ENCODE measurements at regions of chr1 and their contacts with region 1.

Region 1: DNA sequence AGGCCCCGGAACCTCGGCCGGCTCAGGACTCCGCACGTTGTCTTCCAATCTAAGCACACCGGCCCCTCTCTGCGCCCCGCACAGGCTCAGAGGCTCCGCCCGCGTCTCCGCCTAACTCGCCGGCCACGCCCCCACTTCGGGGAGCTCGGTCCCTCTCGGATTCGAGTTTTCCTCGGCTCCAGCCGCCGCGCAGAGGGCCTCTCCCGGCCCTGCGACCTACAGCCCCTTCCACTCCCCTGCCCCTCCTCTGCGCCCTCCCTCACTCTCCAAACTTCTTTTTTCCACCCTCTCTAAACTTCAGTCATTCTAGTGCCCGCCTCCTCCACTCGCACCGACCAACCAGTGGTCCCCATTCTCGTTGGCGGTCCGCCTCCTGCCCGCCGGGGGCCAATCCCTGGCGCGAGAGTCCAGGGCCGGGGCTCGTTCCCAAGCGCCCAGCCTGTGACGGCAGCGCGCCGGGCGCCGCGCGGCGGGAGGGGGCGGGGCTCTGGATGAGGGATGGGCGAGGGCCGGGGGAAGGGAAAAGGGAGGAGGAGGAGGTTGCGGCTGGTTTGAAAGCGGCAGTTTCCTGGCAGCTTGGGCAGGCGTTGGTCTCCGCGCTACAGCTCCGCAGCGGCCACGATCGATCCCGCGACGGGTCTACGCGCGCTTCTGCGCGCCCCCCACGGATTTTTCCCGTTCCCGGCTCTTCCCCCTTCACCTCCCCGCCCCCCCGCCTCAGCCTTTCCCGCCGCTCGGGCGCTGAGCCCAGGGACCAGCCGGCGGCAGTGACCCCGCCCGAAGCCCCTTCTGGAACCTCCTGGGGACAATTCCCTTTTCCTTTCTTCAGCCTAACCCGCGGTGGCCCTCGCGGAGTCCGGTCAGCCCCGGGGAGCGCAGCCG is at the start of gene MAGI3:
- DNase-seq: peak; percentile 70 to 93 (median 88)
- ATAC-seq: peak; percentile 91
- H3K4me3 ChIP-seq: peak within 1 kb of the TSS; percentile 94 to 97
- H3K4me3 Mint-ChIP-seq: peak within 1 kb of the TSS; percentile 95
- H3K27ac ChIP-seq: peak within 1 kb of the TSS; percentile 30 to 47
- H3K27ac Mint-ChIP-seq: peak within 1 kb of the TSS; percentile 84
- H3K4me1 ChIP-seq: peaks cover 13% of the 10 kb centered on the region
- H3K4me1 Mint-ChIP-seq: peaks cover 24% of the 10 kb centered on the region
- H3K27me3 ChIP-seq: peaks cover 0 to 5% of the 10 kb centered on the region in 2 experiments
- H3K27me3 Mint-ChIP-seq: peaks cover 12% of the 10 kb centered on the region
- CTCF ChIP-seq: no peak
- total RNA-seq, gene MAGI3: 1.7 to 3.2 TPM

Region 2: GRCh38 chr1:112230232-112230631 is 1160.0 kb before region 1 on chr1:
- CTCF ChIA-PET with region 1: no interaction called
- POLR2A ChIA-PET with region 1: no interaction called
- intact Hi-C with region 1: no loop called
- DNase-seq: no peak
- ATAC-seq: no peak
- H3K4me3 ChIP-seq: no peak overlapping the region
- H3K4me3 Mint-ChIP-seq: no peak overlapping the region
- H3K27ac ChIP-seq: no peak overlapping the region
- H3K27ac Mint-ChIP-seq: no peak overlapping the region
- H3K4me1 ChIP-seq: no peaks in the 10 kb centered on the region
- H3K4me1 Mint-ChIP-seq: no peaks in the 10 kb centered on the region
- H3K27me3 ChIP-seq: no peaks in the 10 kb centered on the region
- H3K27me3 Mint-ChIP-seq: peaks cover 9% of the 10 kb centered on the region
- CTCF ChIP-seq: no peak

Region 3: GRCh38 chr1:113403065-113403464 is 12.9 kb after region 1 on chr1:
- CTCF ChIA-PET with region 1: interaction called, 7 read pairs
- POLR2A ChIA-PET with region 1: no interaction called
- intact Hi-C with region 1: loop called in 1 of 2 experiments (anchors 2 kb)
- DNase-seq: no peak
- ATAC-seq: no peak
- H3K4me3 ChIP-seq: no peak overlapping the region
- H3K4me3 Mint-ChIP-seq: no peak overlapping the region
- H3K27ac ChIP-seq: no peak overlapping the region
- H3K27ac Mint-ChIP-seq: no peak overlapping the region
- H3K4me1 ChIP-seq: no peaks in the 10 kb centered on the region
- H3K4me1 Mint-ChIP-seq: no peaks in the 10 kb centered on the region
- H3K27me3 ChIP-seq: peaks cover 0 to under 1% of the 10 kb centered on the region in 2 experiments
- H3K27me3 Mint-ChIP-seq: peaks cover 21% of the 10 kb centered on the region
- CTCF ChIP-seq: no peak

Measured in CD8-positive, alpha-beta T cell (primary cell).